HEK293 (cell line): ENCODE measurements at regions of chr1 and their contacts with region 1.

Region 1: DNA sequence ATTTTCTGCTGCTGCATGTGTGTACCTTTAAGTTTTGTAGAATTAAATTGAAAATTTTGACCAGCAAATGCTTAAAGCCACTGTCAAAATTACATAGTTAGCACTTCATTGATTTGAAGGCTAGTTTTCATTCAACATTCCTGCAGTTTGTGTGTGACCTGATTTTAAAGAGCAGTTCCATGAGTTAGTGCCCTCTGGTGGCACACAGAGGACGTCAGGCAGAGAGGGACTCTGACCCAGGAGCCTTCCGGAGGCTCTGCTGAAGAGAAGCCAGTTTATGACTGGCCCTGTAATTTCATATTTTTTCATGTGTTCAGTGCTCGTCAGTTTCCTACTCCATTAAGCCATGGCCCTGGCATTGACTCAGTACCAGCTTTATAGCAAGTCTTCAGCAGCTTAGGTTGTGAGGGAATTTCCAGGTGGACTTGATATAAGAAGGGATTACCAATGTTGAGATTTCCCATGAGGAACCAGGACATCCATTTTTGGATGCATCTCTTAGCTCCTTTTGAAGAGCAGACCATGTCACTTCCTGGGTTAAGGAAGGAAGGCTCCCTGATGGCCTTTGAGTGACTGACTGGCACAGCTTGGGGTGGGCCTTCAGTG is 104.7 kb downstream of the CAMTA1 start:
- H3K4me3 ChIP-seq: no peak overlapping the region
- H3K27ac ChIP-seq: no peak overlapping the region
- H3K4me1 ChIP-seq: no peaks in the 10 kb centered on the region
- CTCF ChIP-seq: peak; percentile 33; the same call in 1 of the 2 replicates

Region 2: DNA sequence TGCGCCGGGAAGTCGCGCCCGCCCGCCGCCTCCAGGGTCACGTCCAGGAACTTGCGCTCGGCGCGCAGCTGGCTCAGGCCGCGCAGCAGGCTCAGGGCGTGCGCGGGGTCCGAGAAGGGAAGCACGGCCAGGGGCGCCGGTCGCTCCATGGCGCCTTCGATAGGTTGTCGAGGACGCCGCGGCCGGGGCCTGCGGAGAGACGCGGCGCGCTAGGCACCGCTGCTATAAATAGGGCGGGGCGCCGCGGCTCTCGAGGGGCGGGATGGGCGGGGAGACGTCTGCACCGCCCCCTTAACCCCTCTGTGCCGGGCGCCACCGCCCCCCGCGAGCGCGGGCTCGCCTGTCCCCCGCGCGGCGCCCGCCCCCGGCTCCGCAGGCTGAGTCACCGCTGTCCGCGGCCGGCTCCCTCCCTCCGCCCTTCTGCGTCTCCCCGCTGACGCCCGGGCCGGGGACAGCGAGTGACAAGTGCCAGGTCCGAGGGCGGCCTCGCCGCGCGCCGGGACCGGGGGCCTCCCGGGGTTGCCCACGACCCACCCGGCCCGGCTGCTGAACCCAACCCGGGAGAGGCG is 287.2 kb before region 1 on chr1 and contains the start of gene KLHL21:
- CTCF ChIA-PET with region 1: no interaction called
- POLR2A ChIA-PET with region 1: no interaction called
- H3K4me3 ChIP-seq: peak within 1 kb of the TSS; percentile 58
- H3K27ac ChIP-seq: peak within 1 kb of the TSS; percentile 82
- H3K4me1 ChIP-seq: no peaks in the 10 kb centered on the region
- CTCF ChIP-seq: no peak

Region 3: GRCh38 chr1:6724516-6725141 is 165.3 kb before region 1 on chr1:
- CTCF ChIA-PET with region 1: interaction called, 19 read pairs
- POLR2A ChIA-PET with region 1: no interaction called
- H3K4me3 ChIP-seq: no peak overlapping the region
- H3K27ac ChIP-seq: no peak overlapping the region
- H3K4me1 ChIP-seq: no peaks in the 10 kb centered on the region
- CTCF ChIP-seq: no peak

Region 4: GRCh38 chr1:6794164-6794563 is 95.8 kb before region 1 on chr1:
- CTCF ChIA-PET with region 1: interaction called, 23 read pairs
- POLR2A ChIA-PET with region 1: no interaction called
- H3K4me3 ChIP-seq: no peak overlapping the region
- H3K27ac ChIP-seq: no peak overlapping the region
- H3K4me1 ChIP-seq: peaks cover 17% of the 10 kb centered on the region; the same call in 1 of the 2 replicates
- CTCF ChIP-seq: no peak; the same call in 1 of the 2 replicates

Region 5: GRCh38 chr1:6904466-6905170 is 14.6 kb after region 1 on chr1:
- CTCF ChIA-PET with region 1: interaction called, 16 read pairs
- POLR2A ChIA-PET with region 1: no interaction called
- H3K4me3 ChIP-seq: no peak overlapping the region
- H3K27ac ChIP-seq: no peak overlapping the region
- H3K4me1 ChIP-seq: no peaks in the 10 kb centered on the region
- CTCF ChIP-seq: no peak

Region 6: GRCh38 chr1:6912518-6912917 is 22.5 kb after region 1 on chr1:
- CTCF ChIA-PET with region 1: interaction called, 10 read pairs
- POLR2A ChIA-PET with region 1: no interaction called
- H3K4me3 ChIP-seq: no peak overlapping the region
- H3K27ac ChIP-seq: no peak overlapping the region
- H3K4me1 ChIP-seq: no peaks in the 10 kb centered on the region
- CTCF ChIP-seq: no peak